Activated naive CD4-positive, alpha-beta T cell treated with anti-CD3 and anti-CD28 coated beads for 36 hours (primary cell): ENCODE measurements at regions of chr7 and their contacts with region 1.

Region 1: DNA sequence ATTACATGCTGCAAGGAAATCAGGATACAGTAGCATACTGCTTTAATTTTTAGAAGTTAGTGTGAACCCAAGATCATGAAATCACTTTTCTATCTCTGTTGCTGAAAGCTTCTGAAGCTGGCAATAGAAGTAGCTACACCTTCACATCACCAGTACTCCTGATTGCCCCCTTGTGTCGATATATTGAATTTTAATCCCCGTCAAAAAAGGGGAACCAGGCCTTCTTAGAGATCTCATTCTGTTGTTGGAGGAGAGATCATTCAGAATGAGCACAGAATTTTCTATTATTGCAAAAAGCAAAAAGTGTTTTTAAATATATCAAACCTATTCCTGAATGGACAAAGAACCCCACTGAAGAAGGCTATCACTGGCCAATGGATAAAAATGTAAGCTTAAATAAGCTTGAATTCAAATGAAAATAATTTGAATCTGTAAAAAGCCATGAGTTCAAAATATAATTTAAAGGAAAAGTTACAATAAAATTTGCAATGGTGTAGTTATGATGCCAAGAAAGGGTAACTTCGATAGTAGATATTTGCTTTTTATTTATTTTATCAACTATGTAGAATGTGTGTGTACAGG is 39.7 kb upstream of the TEX47 start:
- DNase-seq: no peak
- H3K4me3 Mint-ChIP-seq: no peak overlapping the region
- H3K27ac Mint-ChIP-seq: no peak overlapping the region
- H3K4me1 Mint-ChIP-seq: no peaks in the 10 kb centered on the region
- H3K27me3 Mint-ChIP-seq: no peaks in the 10 kb centered on the region

Region 2: DNA sequence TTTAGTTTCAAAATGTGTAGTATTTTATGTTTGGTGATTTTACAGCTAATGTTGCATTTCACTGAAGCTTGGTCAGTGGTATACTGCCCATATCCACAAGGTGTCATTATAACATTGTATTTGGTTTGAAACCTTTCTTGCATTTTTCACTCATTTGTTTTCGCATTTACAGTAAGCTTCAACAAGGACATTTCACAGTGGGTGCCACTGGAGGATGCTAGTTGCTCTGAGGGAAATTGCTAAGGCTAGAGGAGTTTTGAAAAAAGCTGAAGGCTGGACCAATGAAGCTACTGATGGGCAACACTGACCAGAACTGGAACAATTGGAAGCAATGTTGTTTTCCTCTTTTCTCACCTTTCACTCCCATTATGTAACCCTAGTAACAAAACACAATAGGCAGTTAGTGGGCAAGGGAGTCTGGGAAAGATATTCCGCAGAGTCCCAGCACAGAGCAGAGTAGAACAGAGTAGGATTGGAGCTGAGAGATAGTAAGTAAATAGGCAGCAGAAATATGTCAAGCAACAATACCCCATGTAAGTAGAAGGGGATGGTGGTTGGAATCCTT is 591.8 kb before region 1 on chr7:
- CTCF ChIA-PET with region 1: interaction called, 3 read pairs
- intact Hi-C with region 1: loop called (anchors 1 kb)
- DNase-seq: no peak
- H3K4me3 Mint-ChIP-seq: no peak overlapping the region
- H3K27ac Mint-ChIP-seq: no peak overlapping the region
- H3K4me1 Mint-ChIP-seq: no peaks in the 10 kb centered on the region
- H3K27me3 Mint-ChIP-seq: peaks cover 16% of the 10 kb centered on the region

Region 3: GRCh38 chr7:88357781-88358525 is 477.3 kb before region 1 on chr7:
- CTCF ChIA-PET with region 1: no interaction called
- intact Hi-C with region 1: no loop called
- DNase-seq: no peak
- H3K4me3 Mint-ChIP-seq: no peak overlapping the region
- H3K27ac Mint-ChIP-seq: no peak overlapping the region
- H3K4me1 Mint-ChIP-seq: no peaks in the 10 kb centered on the region
- H3K27me3 Mint-ChIP-seq: peaks cover 9% of the 10 kb centered on the region

Region 4: DNA sequence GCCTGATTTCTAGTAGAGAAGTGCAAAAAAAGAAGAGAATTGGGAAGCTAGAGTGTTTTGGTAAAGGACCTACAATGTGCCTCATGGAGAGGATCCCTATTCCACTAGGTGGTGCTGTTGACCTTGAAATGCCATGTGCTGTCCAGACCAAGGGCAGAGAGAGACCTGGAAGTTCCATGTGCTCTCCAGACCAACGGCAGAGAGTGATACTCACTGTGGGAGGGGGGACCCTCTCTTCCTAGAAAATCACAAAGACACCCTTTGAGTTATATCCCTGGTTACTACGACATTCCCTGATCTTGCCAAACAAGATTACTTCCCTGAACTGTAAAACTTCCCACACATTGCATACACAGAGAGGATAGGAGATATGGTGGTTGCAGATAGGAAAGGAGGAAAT is 288.4 kb before region 1 on chr7:
- CTCF ChIA-PET with region 1: no interaction called
- intact Hi-C with region 1: loop called (anchors 5 kb)
- DNase-seq: peak; percentile 49
- H3K4me3 Mint-ChIP-seq: no peak overlapping the region
- H3K27ac Mint-ChIP-seq: no peak overlapping the region
- H3K4me1 Mint-ChIP-seq: no peaks in the 10 kb centered on the region
- H3K27me3 Mint-ChIP-seq: peaks cover 5% of the 10 kb centered on the region

Region 5: DNA sequence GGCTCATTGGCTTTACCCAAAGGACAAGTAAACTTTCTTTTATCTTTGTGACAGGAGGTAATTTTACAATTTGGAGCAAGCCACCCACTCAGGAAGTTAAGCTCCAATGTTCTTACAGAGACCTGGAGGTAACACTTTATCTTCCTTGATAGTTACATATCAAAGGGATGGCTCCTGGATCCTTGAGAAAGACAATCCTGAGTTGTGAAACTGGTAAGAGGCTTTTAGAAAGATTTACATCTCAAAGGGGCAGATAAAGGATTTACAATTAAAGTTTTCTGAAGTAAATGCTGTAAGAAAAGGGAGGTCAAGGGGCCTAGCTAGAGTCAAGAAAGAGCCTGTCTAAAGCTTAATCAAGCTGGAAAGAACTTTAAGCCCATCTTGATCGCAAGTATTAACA is 200.1 kb before region 1 on chr7:
- CTCF ChIA-PET with region 1: no interaction called
- intact Hi-C with region 1: no loop called
- DNase-seq: no peak
- H3K4me3 Mint-ChIP-seq: no peak overlapping the region
- H3K27ac Mint-ChIP-seq: no peak overlapping the region
- H3K4me1 Mint-ChIP-seq: no peaks in the 10 kb centered on the region
- H3K27me3 Mint-ChIP-seq: peaks cover 3% of the 10 kb centered on the region

Region 6: DNA sequence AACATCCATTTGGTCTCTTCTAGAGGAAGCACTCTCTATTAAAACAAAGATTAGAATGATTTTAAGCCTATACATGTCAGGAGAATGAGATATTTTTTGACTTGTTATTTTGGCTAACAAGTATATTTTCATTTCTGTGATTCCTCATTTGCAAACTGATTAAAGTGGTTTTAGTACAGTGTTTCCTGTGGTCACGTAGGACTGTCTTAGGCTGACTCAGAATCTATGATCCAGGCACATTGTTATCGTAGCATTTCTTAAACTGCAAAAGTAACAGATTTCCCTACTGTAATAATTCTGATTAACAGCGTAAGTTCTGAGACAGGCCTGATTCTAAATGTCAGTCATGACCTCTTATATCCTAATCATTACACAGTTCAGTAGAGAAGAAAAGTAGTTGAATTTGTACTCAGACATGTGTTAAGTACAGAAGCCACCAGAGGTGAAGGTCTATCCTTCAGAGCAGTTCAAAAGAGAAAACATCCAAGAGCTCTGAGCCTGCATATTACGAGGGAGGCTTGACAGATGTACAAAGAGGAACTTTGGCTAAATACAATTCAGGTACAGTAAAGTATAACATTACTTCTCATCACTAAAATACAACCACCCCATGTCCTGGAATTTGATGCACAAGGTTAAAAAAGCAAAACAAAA is 84.4 kb after region 1 on chr7:
- CTCF ChIA-PET with region 1: no interaction called
- intact Hi-C with region 1: no loop called
- DNase-seq: no peak
- H3K4me3 Mint-ChIP-seq: no peak overlapping the region
- H3K27ac Mint-ChIP-seq: no peak overlapping the region
- H3K4me1 Mint-ChIP-seq: no peaks in the 10 kb centered on the region
- H3K27me3 Mint-ChIP-seq: no peaks in the 10 kb centered on the region